Common myeloid progenitor, CD34-positive (primary cell): ENCODE measurements at regions of chr12 and their contacts with region 1.

Region 1: GRCh38 chr12:85872497-85873091 is 1.5 kb upstream of the NTS start:
- DNase-seq: peak; percentile 67 to 80 (median 77)
- H3K4me3 ChIP-seq: no peak overlapping the region
- H3K27ac ChIP-seq: no peak overlapping the region
- H3K4me1 ChIP-seq: peaks cover 0 to 2% (median 1%) of the 10 kb centered on the region in 4 experiments
- H3K27me3 ChIP-seq: no peaks in the 10 kb centered on the region

Region 2: GRCh38 chr12:85468356-85469157 is 404.0 kb before region 1 on chr12:
- CTCF ChIA-PET with region 1: interaction called, 37 read pairs
- POLR2A ChIA-PET with region 1: no interaction called
- DNase-seq: peak; percentile 63 to 84 (median 80)
- H3K4me3 ChIP-seq: peak overlapping the region in 6 of 7 experiments; percentile 44 to 76 (median 54)
- H3K27ac ChIP-seq: peak overlapping the region in 1 of 2 experiments; percentile 22
- H3K4me1 ChIP-seq: peaks cover 8 to 40% (median 24%) of the 10 kb centered on the region in 4 experiments
- H3K27me3 ChIP-seq: no peaks in the 10 kb centered on the region

Region 3: DNA sequence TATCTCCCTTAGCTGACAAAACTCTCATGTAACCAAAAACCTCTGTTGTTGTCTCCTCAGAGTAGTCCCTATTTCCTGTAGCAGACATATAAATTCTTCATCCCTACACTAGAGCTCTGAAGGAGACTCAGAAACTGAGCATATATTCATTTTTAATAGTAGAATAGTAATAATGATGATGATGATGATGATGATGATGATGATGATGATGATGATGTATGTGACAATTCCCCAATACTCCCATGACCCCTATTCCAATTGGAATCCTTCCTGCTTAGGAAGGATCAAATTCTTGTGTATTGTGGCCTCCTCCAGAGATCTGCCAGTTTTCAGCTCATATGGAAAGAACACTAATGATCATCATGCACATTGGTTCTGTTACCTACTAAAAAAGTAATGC is 63.1 kb before region 1 on chr12:
- CTCF ChIA-PET with region 1: no interaction called
- POLR2A ChIA-PET with region 1: no interaction called
- DNase-seq: no peak
- H3K4me3 ChIP-seq: no peak overlapping the region
- H3K27ac ChIP-seq: no peak overlapping the region
- H3K4me1 ChIP-seq: peaks cover 0 to 10% (median 7%) of the 10 kb centered on the region in 4 experiments
- H3K27me3 ChIP-seq: no peaks in the 10 kb centered on the region